T-cell (primary cell): ENCODE measurements at regions of chr6 and their contacts with region 1.

Region 1: DNA sequence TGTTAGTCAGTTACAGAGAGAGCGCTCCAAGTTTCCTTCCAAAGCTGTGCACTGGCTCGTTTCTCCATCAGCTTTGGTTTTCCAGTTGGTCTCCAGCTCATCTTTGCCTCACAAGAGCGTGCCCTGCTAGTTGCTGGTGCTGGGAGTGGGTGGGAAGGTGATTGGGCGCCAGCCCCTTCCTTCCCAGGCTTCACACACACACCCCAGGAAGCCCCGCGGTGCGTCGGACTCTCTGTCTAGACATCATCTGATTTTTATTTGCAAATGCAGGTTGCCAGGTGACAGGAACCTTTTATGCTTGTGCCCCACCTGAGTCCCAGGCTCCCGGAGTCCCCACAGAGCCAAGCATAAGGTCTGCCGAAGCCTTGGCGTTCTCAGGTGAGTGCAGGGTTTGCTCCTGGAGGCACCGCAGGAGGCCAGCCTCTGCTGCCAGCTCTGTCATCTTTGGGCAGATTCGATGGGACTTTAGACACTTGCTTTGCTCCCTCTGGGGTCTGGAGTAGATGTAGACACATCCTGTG is 7.1 kb downstream of the IRF4 start:
- DNase-seq: no peak
- ATAC-seq: no peak
- H3K4me3 ChIP-seq: no peak overlapping the region
- H3K4me3 Mint-ChIP-seq: no peak overlapping the region
- H3K27ac ChIP-seq: no peak overlapping the region
- H3K27ac Mint-ChIP-seq: no peak overlapping the region
- H3K4me1 ChIP-seq: peaks cover 16 to 45% of the 10 kb centered on the region in 2 experiments
- H3K4me1 Mint-ChIP-seq: peaks cover 31 to 67% (median 53%) of the 10 kb centered on the region in 3 donors
- H3K27me3 ChIP-seq: peaks cover 0 to 16% of the 10 kb centered on the region in 2 experiments
- H3K27me3 Mint-ChIP-seq: peaks cover 3 to 4% of the 10 kb centered on the region in 2 donors

Region 2: DNA sequence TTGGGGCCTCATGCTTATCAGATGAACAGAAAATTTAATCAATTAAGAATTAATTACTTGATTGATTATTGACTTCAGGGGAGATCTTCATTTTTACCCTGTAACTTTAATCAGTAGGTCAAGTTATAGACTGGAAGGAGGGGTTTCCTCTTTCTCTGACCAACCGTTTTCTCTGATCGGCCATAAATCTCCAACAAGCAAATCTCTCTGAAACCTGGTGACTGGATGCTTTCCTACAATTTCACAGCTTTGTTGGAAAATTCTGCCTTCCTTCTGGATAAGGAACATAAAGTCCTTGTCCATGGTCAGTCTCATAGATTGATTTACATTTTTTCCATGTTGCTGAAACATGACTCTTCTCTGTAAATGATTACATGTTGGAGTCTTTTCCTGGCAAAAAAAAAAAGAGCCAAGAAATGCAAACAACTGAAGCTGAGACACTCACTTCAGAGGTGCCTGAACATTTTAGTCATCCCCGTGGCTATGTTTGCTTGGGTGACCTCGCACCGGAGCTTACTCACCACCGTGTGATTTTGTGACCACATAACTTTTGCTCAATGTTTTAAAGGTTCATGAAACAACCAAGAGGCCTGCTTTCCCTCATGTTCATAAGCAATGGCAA is 23.9 kb after region 1 on chr6:
- CTCF ChIA-PET with region 1: no interaction called
- POLR2A ChIA-PET with region 1: interaction called in 1 of 2 experiments, 14 read pairs
- DNase-seq: peak in 1 of 35 experiments; percentile 34
- ATAC-seq: peak in 3 of 4 experiments; percentile 69 to 92 (median 77)
- H3K4me3 ChIP-seq: no peak overlapping the region
- H3K4me3 Mint-ChIP-seq: no peak overlapping the region
- H3K27ac ChIP-seq: no peak overlapping the region
- H3K27ac Mint-ChIP-seq: no peak overlapping the region
- H3K4me1 ChIP-seq: peaks cover 0 to 7% of the 10 kb centered on the region in 2 experiments
- H3K4me1 Mint-ChIP-seq: peaks cover 0 to 9% (median 7%) of the 10 kb centered on the region in 3 donors
- H3K27me3 ChIP-seq: peaks cover 0 to 5% of the 10 kb centered on the region in 2 experiments
- H3K27me3 Mint-ChIP-seq: no peaks in the 10 kb centered on the region